ENCODE measurements at regions of chr6 and their contacts with region 1.

Region 1: DNA sequence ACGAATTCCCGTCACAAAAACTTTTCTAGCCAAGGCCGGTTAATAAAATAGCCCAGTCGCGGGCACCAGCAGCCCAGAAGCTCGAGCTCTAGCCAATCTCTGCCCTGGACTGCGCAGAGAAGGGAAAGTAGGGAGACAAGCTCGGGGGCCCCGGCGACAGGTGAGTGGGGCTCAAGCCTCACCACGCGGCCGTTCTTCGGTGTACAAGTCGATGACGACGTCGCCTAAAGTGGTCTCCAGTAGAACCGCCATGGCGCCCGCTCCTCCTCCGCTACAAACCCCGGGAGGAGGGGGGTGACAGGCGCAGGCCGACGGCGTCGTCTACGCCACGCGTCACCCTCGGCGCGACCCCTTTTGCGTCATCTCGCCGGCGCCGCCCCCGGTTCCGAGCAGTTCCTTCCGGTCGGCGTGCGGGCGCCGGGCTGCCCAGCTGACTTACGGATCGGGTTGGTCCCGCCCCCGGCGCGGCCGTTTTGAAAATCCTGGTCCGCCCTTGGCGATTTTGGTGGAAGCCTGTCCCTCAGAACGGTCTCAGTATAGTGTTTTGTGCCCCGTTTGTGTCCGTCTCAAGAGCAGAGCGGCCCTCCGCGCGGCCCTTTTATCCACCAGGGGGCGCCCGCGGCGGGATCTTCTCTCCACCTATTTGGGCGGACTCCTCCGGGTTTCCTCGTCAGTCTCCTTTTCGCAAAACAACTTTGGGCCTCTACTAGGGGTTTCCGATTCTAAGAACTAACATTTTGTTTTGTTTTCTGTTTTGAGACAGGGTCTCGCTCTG is at the start of gene PPIL4:
- DNase-seq: peak; percentile 94
- ATAC-seq: peak; percentile 93
- H3K4me3 ChIP-seq: peak within 1 kb of the TSS; percentile 79
- H3K27ac ChIP-seq: peak within 1 kb of the TSS; percentile 85
- H3K4me1 ChIP-seq: no peaks in the 10 kb centered on the region; the same call in 1 of the 2 replicates
- H3K27me3 ChIP-seq: peaks cover 3% of the 10 kb centered on the region
- CTCF ChIP-seq: peak; percentile 66
- POLR2A ChIP-seq: peak; percentile 81; the same call in 1 of the 2 replicates
- RAD21 ChIP-seq: peak; percentile 46
- total RNA-seq, gene PPIL4: 13.3 and 29.7 TPM in 2 replicates

Region 2: DNA sequence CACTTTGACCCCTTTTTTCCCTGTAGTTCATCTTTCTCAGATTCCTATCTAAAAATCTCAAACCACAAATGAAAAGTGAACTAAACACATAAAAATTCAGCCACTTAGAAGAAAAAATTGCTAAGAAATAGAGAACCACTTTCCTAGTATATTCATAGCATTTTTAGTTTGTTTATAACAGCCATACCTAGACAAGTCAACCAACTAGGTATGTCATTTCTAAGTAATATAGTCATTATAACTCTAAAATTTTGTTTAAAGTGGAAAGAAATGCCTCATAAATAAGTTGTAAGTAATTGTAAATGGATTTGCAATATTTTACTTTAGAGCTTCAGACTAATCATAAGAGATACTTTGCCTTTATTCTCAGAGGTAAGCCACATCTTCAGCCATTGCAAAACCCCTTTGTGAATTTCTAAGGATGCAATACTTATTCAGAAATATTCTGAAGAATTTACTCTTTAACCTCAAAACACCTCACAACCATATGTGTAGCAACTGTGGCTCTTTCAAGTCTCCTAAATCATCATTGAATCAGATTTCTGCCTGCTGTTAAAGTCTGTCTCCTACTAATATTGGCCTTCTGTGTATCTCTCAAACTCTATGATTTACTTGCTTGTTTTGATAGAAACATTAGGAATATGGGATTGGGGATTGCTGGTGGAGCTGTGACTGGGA is 152.8 kb before region 1 on chr6:
- CTCF ChIA-PET with region 1: no interaction called
- POLR2A ChIA-PET with region 1: no interaction called
- dilution Hi-C with region 1: no loop called
- in situ Hi-C with region 1: no loop called
- intact Hi-C with region 1: no loop called
- DNase-seq: peak; percentile 35
- ATAC-seq: peak; percentile 54
- H3K4me3 ChIP-seq: no peak overlapping the region
- H3K27ac ChIP-seq: no peak overlapping the region; the same call in 1 of the 2 replicates
- H3K4me1 ChIP-seq: peaks cover 3% of the 10 kb centered on the region
- H3K27me3 ChIP-seq: no peaks in the 10 kb centered on the region
- CTCF ChIP-seq: no peak
- POLR2A ChIP-seq: no peak
- RAD21 ChIP-seq: no peak

Region 3: GRCh38 chr6:149484733-149485700 is 60.9 kb before region 1 on chr6 and contains the start of gene ZC3H12D:
- CTCF ChIA-PET with region 1: no interaction called
- POLR2A ChIA-PET with region 1: no interaction called
- dilution Hi-C with region 1: no loop called
- in situ Hi-C with region 1: no loop called
- intact Hi-C with region 1: no loop called
- DNase-seq: peak; percentile 33
- ATAC-seq: peak; percentile 42
- H3K4me3 ChIP-seq: no peak within 1 kb of the TSS
- H3K27ac ChIP-seq: no peak within 1 kb of the TSS
- H3K4me1 ChIP-seq: peaks cover 5% of the 10 kb centered on the region; the same call in 1 of the 2 replicates
- H3K27me3 ChIP-seq: no peaks in the 10 kb centered on the region; the same call in 1 of the 2 replicates
- CTCF ChIP-seq: no peak
- POLR2A ChIP-seq: no peak
- RAD21 ChIP-seq: no peak
- total RNA-seq, gene ZC3H12D: under 0.01 TPM in 1 of 2 replicates, not detected in the other

Region 4: DNA sequence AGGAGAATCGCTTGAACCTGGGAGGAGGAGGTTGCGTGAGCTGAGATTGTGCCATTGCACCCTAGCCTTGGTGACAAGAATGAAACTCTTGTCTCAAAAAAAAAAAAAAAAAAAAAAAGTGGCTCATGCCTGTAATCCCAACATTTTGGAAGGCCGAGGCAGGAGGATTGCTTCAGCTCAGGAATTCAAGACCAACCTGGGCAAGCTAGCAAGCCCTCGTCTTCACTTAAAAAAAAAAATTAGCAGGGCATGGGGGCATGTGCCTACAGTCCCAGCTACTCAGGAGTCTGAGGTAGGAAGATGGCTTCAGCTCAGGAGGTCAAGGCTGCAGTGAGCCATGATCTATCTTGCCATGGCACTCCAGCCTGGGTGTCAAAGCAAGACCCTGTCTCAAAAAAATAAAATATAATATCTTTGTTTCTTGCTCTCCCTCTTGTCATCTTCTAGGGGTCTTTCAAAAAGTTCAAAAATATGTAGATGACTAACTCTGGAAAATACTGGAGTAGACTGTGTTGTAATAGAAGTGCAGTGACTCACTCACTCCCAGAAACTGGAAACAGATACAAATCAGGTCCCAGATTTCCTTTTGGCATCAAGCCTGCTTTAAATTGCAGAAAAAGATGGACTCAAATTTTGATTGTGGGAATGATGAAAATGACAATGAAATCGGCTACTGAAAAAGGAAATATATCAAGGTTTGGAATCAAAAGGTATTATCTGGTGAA is 17.4 kb after region 1 on chr6:
- CTCF ChIA-PET with region 1: no interaction called
- POLR2A ChIA-PET with region 1: no interaction called
- dilution Hi-C with region 1: no loop called
- in situ Hi-C with region 1: no loop called
- intact Hi-C with region 1: loop called (anchors 2 kb)
- DNase-seq: peak; percentile 90
- ATAC-seq: no peak
- H3K4me3 ChIP-seq: no peak overlapping the region
- H3K27ac ChIP-seq: peak overlapping the region; percentile 95
- H3K4me1 ChIP-seq: peaks cover 3% of the 10 kb centered on the region
- H3K27me3 ChIP-seq: peaks cover 2% of the 10 kb centered on the region
- CTCF ChIP-seq: no peak
- POLR2A ChIP-seq: no peak
- RAD21 ChIP-seq: no peak

Region 5: GRCh38 chr6:149863697-149864577 is 318.0 kb after region 1 on chr6 and contains the start of gene LRP11:
- CTCF ChIA-PET with region 1: no interaction called
- POLR2A ChIA-PET with region 1: no interaction called
- dilution Hi-C with region 1: no loop called
- in situ Hi-C with region 1: no loop called
- intact Hi-C with region 1: loop called (anchors 5 kb)
- DNase-seq: peak; percentile 74
- ATAC-seq: peak; percentile 81
- H3K4me3 ChIP-seq: peak within 1 kb of the TSS; percentile 54
- H3K27ac ChIP-seq: peak within 1 kb of the TSS; percentile 89
- H3K4me1 ChIP-seq: peaks cover 24% of the 10 kb centered on the region
- H3K27me3 ChIP-seq: no peaks in the 10 kb centered on the region
- CTCF ChIP-seq: 0 out of 2 replicates have a peak, but pooled peaks have one; percentile 3
- POLR2A ChIP-seq: peak; percentile 59
- RAD21 ChIP-seq: peak; percentile 1; the same call in 1 of the 2 replicates
- total RNA-seq, gene LRP11: 63.8 and 74.7 TPM in 2 replicates